HCT116 (cell line): ENCODE measurements at regions of chr13 and their contacts with region 1.

Region 1: GRCh38 chr13:64397701-64398100 is 2832.4 kb downstream of the PCDH9 start:
- DNase-seq: no peak
- ATAC-seq: no peak
- H3K4me3 ChIP-seq: no peak overlapping the region
- H3K27ac ChIP-seq: no peak overlapping the region
- H3K4me1 ChIP-seq: no peaks in the 10 kb centered on the region
- H3K27me3 ChIP-seq: no peaks in the 10 kb centered on the region
- CTCF ChIP-seq: no peak
- POLR2A ChIP-seq: no peak
- RAD21 ChIP-seq: no peak

Region 2: GRCh38 chr13:64362564-64362963 is 35.1 kb before region 1 on chr13:
- CTCF ChIA-PET with region 1: no interaction called
- POLR2A ChIA-PET with region 1: no interaction called
- RAD21 ChIA-PET with region 1: no interaction called
- intact Hi-C with region 1: loop called (anchors 5 kb)
- DNase-seq: no peak
- ATAC-seq: no peak
- H3K4me3 ChIP-seq: no peak overlapping the region
- H3K27ac ChIP-seq: no peak overlapping the region
- H3K4me1 ChIP-seq: no peaks in the 10 kb centered on the region
- H3K27me3 ChIP-seq: no peaks in the 10 kb centered on the region
- CTCF ChIP-seq: no peak
- POLR2A ChIP-seq: no peak
- RAD21 ChIP-seq: no peak